Activated naive CD4-positive, alpha-beta T cell treated with anti-CD3 and anti-CD28 coated beads, Interleukin-2, amount 10 ng/mL, durations not matched to agents 7 days and 5 days (primary cell): ENCODE measurements at regions of chr14 and their contacts with region 1.

Region 1: GRCh38 chr14:65958664-65959562 is 527.3 kb upstream of the CCDC196 start:
- DNase-seq: no peak
- H3K4me3 Mint-ChIP-seq: no peak overlapping the region
- H3K27ac Mint-ChIP-seq: peak overlapping the region; percentile 74
- H3K4me1 Mint-ChIP-seq: peaks cover 28% of the 10 kb centered on the region
- H3K27me3 Mint-ChIP-seq: peaks cover 9% of the 10 kb centered on the region

Region 2: DNA sequence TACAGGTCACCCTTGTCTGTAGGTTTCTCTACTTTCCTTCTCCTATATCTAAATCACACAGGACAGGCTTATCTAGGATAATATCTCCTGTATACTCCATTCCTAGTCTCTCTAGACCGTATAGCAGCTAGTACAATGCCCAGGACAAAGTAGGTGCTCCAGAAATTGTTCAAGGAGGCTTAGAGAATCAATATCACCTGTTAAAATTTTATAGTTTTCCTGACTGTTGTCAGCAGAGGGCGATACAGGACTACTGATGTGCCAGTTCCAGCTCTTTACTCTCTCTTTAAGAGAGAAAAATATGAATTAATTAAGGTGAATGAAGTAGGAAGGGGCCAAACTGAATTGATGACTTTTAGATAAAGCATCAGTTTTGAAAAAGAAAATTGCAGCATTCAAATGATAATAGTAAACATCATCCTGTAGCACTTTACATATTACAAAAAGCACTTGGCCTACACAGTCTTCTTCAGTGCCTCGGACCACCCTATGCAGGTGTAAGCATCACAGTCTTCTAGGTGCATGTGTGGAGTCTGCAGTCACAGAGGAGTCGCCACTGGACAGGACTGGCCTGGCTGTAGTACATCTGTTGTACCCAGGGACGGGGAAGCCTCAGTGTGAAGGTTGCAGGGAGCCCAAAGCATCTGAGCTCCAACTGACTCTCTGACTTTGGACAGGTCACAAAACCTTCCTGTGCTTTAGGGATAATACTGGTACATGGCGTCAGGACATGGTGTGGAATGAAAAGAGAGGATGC is 794.7 kb before region 1 on chr14:
- CTCF ChIA-PET with region 1: interaction called, 27 read pairs
- DNase-seq: peak; percentile 56
- H3K4me3 Mint-ChIP-seq: no peak overlapping the region
- H3K27ac Mint-ChIP-seq: no peak overlapping the region
- H3K4me1 Mint-ChIP-seq: peaks cover 15% of the 10 kb centered on the region
- H3K27me3 Mint-ChIP-seq: peaks cover 6% of the 10 kb centered on the region

Region 3: GRCh38 chr14:65824285-65824977 is 134.5 kb before region 1 on chr14:
- CTCF ChIA-PET with region 1: interaction called, 64 read pairs
- DNase-seq: peak; percentile 71
- H3K4me3 Mint-ChIP-seq: no peak overlapping the region
- H3K27ac Mint-ChIP-seq: no peak overlapping the region
- H3K4me1 Mint-ChIP-seq: peaks cover 48% of the 10 kb centered on the region
- H3K27me3 Mint-ChIP-seq: peaks cover 9% of the 10 kb centered on the region

Region 4: DNA sequence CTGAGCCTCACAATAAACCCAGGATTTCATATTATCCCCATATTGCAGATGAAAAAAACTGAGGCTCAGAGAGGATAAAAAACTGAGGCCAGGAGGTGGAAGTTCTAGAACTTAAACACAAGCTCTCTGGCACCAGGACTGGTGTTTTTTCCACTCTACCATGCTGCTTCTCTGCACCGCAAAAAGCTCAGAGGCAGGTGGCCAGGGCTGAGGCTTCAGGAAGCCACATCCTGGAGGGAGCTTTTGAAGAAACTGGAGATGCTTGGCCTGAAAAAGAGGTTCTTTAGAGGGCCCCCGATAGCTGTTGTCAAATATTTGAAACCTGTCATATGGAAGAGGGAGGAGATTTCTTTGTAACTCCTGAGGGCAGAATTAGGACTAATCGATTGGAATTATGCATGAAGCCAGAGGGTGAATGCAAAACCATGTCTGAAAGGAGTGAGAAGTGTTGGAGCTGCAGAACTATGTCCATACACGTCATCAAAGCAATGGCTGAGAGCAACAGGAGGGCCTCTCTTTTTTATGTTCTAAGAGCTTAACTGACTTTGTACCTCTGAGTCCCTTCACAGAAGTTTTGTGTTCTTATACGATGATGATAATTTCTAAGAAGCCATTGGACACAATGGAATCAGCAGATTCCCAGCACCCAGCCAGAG is 97.8 kb before region 1 on chr14:
- CTCF ChIA-PET with region 1: interaction called, 11 read pairs
- DNase-seq: peak; percentile 80
- H3K4me3 Mint-ChIP-seq: no peak overlapping the region
- H3K27ac Mint-ChIP-seq: peak overlapping the region; percentile 95
- H3K4me1 Mint-ChIP-seq: peaks cover 71% of the 10 kb centered on the region
- H3K27me3 Mint-ChIP-seq: no peaks in the 10 kb centered on the region

Region 5: GRCh38 chr14:65927931-65928356 is 31.0 kb before region 1 on chr14:
- CTCF ChIA-PET with region 1: interaction called, 10 read pairs
- DNase-seq: peak; percentile 90
- H3K4me3 Mint-ChIP-seq: peak overlapping the region; percentile 42
- H3K27ac Mint-ChIP-seq: peak overlapping the region; percentile 99
- H3K4me1 Mint-ChIP-seq: peaks cover 79% of the 10 kb centered on the region
- H3K27me3 Mint-ChIP-seq: no peaks in the 10 kb centered on the region

Region 6: GRCh38 chr14:66070509-66071319 is 111.8 kb after region 1 on chr14:
- CTCF ChIA-PET with region 1: interaction called, 30 read pairs
- DNase-seq: peak; percentile 81
- H3K4me3 Mint-ChIP-seq: no peak overlapping the region
- H3K27ac Mint-ChIP-seq: no peak overlapping the region
- H3K4me1 Mint-ChIP-seq: peaks cover 16% of the 10 kb centered on the region
- H3K27me3 Mint-ChIP-seq: peaks cover 17% of the 10 kb centered on the region